ENCODE measurements at regions of chr1 and their contacts with region 1.

Region 1: GRCh38 chr1:241485554-241485992 is 34.0 kb downstream of the FH start:
- DNase-seq: peak; percentile 49 to 68 (median 59)
- ATAC-seq: peak; percentile 89
- H3K4me3 ChIP-seq: no peak overlapping the region
- H3K27ac ChIP-seq: no peak overlapping the region; the same call in 2 of the 3 replicates
- H3K4me1 ChIP-seq: peaks cover 0 to 18% of the 10 kb centered on the region in 2 experiments; a peak in 2 of 5 replicates
- H3K27me3 ChIP-seq: no peaks in the 10 kb centered on the region
- CTCF ChIP-seq: peak; percentile 49 to 77 (median 68)
- EP300 ChIP-seq: no peak; the same call in 1 of the 2 replicates
- POLR2A ChIP-seq: no peak
- RAD21 ChIP-seq: peak; percentile 34 to 71; a peak in 3 of 4 replicates

Region 2: GRCh38 chr1:240189386-240189989 is 1296.1 kb before region 1 on chr1:
- CTCF ChIA-PET with region 1: no interaction called
- POLR2A ChIA-PET with region 1: no interaction called
- in situ Hi-C with region 1: no loop called
- intact Hi-C with region 1: loop called (anchors 5 kb)
- DNase-seq: peak; percentile 35 to 50 (median 47)
- ATAC-seq: peak; percentile 70; the same call in 1 of the 3 replicates
- H3K4me3 ChIP-seq: no peak overlapping the region
- H3K27ac ChIP-seq: no peak overlapping the region
- H3K4me1 ChIP-seq: no peaks in the 10 kb centered on the region
- H3K27me3 ChIP-seq: no peaks in the 10 kb centered on the region
- CTCF ChIP-seq: peak; percentile 42 to 65 (median 59); a peak in 5 of 6 replicates
- EP300 ChIP-seq: no peak
- POLR2A ChIP-seq: no peak
- RAD21 ChIP-seq: peak; percentile 35 to 49; a peak in 3 of 4 replicates

Region 3: DNA sequence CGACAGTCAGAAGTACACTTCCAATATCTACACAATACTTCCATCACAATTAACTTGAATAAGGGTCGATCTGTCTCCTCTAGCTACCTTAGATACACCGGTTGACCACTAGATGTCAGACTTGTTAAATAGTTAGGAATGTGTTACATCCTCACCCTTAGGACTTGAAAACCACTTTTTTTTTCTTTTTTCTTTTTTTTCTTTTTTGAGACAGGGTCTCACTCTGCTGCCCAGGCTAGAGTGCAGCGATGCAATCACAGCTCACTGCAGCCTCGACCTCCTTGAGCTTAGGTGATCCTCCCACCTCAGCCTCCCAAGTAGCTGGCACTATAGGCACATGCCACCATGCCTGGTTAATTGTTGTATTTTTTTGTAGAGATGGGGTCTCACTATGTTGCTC is 753.2 kb before region 1 on chr1:
- CTCF ChIA-PET with region 1: no interaction called
- POLR2A ChIA-PET with region 1: no interaction called
- in situ Hi-C with region 1: no loop called
- intact Hi-C with region 1: loop called (anchors 5 kb)
- DNase-seq: peak; percentile 41 to 50 (median 44)
- ATAC-seq: peak; percentile 93
- H3K4me3 ChIP-seq: no peak overlapping the region
- H3K27ac ChIP-seq: no peak overlapping the region
- H3K4me1 ChIP-seq: no peaks in the 10 kb centered on the region
- H3K27me3 ChIP-seq: no peaks in the 10 kb centered on the region
- CTCF ChIP-seq: peak; percentile 20 to 59 (median 58); a peak in 5 of 6 replicates
- EP300 ChIP-seq: no peak
- POLR2A ChIP-seq: no peak
- RAD21 ChIP-seq: peak; percentile 35 to 59; a peak in 3 of 4 replicates

Region 4: DNA sequence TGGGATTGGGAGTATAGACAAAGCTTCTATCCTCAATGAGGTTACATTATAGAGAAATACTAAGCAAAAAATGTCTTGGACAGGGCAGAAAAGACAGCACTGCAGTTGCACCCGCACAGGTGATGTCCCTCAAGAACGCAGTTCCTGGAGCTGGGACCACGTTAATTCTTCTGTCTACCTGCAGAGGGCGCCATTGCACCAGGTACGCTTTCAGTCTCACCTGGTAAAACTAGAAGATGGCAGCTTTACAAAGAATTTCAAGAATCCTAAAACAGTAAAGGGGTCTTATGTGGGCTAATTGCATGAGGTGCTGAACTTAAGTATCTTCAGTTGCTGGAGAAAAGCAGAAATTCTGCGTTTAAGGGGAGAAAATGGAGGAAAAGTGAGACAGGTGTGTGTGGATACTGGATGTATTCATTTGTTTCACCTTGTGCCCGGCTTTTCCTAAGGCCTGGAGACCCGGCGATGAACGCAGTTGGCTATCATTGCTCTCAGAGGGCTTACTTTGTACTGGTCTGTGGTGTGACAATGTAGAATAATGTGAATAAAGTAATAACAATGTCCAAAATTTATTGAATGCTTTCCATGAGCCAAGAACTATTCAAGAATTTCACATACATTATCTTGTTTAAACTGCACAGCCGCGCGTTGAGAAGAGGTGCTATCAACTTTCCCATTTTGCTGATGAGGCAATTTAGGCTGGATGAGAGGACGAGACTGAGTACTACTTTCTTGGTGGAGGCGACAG is 597.4 kb before region 1 on chr1:
- CTCF ChIA-PET with region 1: interaction called, 5 read pairs
- POLR2A ChIA-PET with region 1: no interaction called
- in situ Hi-C with region 1: no loop called
- intact Hi-C with region 1: loop called (anchors 1 kb)
- DNase-seq: peak; percentile 57 to 71 (median 68)
- ATAC-seq: peak; percentile 91
- H3K4me3 ChIP-seq: no peak overlapping the region
- H3K27ac ChIP-seq: no peak overlapping the region
- H3K4me1 ChIP-seq: no peaks in the 10 kb centered on the region
- H3K27me3 ChIP-seq: no peaks in the 10 kb centered on the region
- CTCF ChIP-seq: peak; percentile 70 to 91 (median 76)
- EP300 ChIP-seq: no peak
- POLR2A ChIP-seq: no peak
- RAD21 ChIP-seq: peak; percentile 73 to 81

Region 5: GRCh38 chr1:241408170-241408569 is 77.4 kb before region 1 on chr1:
- CTCF ChIA-PET with region 1: no interaction called
- POLR2A ChIA-PET with region 1: no interaction called
- in situ Hi-C with region 1: no loop called
- intact Hi-C with region 1: loop called (anchors 5 kb)
- DNase-seq: peak in 2 of 4 experiments; percentile 36 to 46
- ATAC-seq: peak; percentile 89
- H3K4me3 ChIP-seq: no peak overlapping the region
- H3K27ac ChIP-seq: no peak overlapping the region
- H3K4me1 ChIP-seq: no peaks in the 10 kb centered on the region
- H3K27me3 ChIP-seq: no peaks in the 10 kb centered on the region
- CTCF ChIP-seq: peak in 2 of 3 experiments; percentile 53 to 58; a peak in 5 of 6 replicates
- EP300 ChIP-seq: no peak
- POLR2A ChIP-seq: no peak
- RAD21 ChIP-seq: peak; percentile 51 to 67

Region 6: GRCh38 chr1:241499910-241500309 is 14.3 kb after region 1 on chr1:
- CTCF ChIA-PET with region 1: no interaction called
- POLR2A ChIA-PET with region 1: interaction called, 11 read pairs
- in situ Hi-C with region 1: no loop called
- intact Hi-C with region 1: no loop called
- DNase-seq: peak in 3 of 4 experiments; percentile 26 to 36 (median 30)
- ATAC-seq: peak; percentile 66; the same call in 2 of the 3 replicates
- H3K4me3 ChIP-seq: no peak overlapping the region
- H3K27ac ChIP-seq: no peak overlapping the region
- H3K4me1 ChIP-seq: no peaks in the 10 kb centered on the region
- H3K27me3 ChIP-seq: no peaks in the 10 kb centered on the region
- CTCF ChIP-seq: peak in 2 of 3 experiments; percentile 50 to 66; a peak in 3 of 6 replicates
- EP300 ChIP-seq: no peak
- POLR2A ChIP-seq: no peak
- RAD21 ChIP-seq: peak; percentile 61 to 65

Region 7: GRCh38 chr1:241566651-241567050 is 81.1 kb after region 1 on chr1:
- CTCF ChIA-PET with region 1: no interaction called
- POLR2A ChIA-PET with region 1: no interaction called
- in situ Hi-C with region 1: no loop called
- intact Hi-C with region 1: no loop called
- DNase-seq: no peak
- ATAC-seq: no peak
- H3K4me3 ChIP-seq: no peak overlapping the region
- H3K27ac ChIP-seq: no peak overlapping the region
- H3K4me1 ChIP-seq: no peaks in the 10 kb centered on the region
- H3K27me3 ChIP-seq: peaks cover 15 to 19% of the 10 kb centered on the region in 2 experiments
- CTCF ChIP-seq: no peak
- EP300 ChIP-seq: no peak
- POLR2A ChIP-seq: no peak
- RAD21 ChIP-seq: no peak

Region 8: DNA sequence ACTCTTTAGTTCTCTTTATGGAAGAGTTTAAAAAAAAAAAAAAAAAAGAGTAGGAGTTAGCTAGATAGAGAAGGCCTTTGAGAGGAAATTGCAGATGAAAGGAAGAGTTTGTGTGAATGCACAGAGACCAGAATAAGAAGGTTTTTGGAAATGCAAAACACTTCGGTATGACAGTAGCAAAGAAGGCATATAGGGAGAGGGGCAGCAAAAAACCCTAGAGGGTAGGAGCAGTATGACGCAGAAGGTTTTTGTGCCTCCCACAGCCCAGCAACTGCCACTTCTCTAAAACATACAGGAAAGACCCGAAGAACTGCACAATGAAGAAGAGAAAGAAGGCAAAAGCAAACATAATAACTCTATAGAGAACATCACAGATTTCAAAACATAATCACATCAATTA is 250.8 kb after region 1 on chr1:
- CTCF ChIA-PET with region 1: no interaction called
- POLR2A ChIA-PET with region 1: no interaction called
- in situ Hi-C with region 1: no loop called
- intact Hi-C with region 1: no loop called
- DNase-seq: peak in 3 of 4 experiments; percentile 29 to 46 (median 30)
- ATAC-seq: peak; percentile 83
- H3K4me3 ChIP-seq: no peak overlapping the region
- H3K27ac ChIP-seq: no peak overlapping the region
- H3K4me1 ChIP-seq: peaks cover 11 to 22% of the 10 kb centered on the region in 2 experiments; a peak in 4 of 5 replicates
- H3K27me3 ChIP-seq: no peaks in the 10 kb centered on the region
- CTCF ChIP-seq: peak in 2 of 3 experiments; percentile 9 to 20; a peak in 1 of 6 replicates
- EP300 ChIP-seq: no peak
- POLR2A ChIP-seq: no peak
- RAD21 ChIP-seq: no peak